Ovary (tissue), 10 donors: ENCODE measurements at regions of chr16 and their contacts with region 1.

Region 1: DNA sequence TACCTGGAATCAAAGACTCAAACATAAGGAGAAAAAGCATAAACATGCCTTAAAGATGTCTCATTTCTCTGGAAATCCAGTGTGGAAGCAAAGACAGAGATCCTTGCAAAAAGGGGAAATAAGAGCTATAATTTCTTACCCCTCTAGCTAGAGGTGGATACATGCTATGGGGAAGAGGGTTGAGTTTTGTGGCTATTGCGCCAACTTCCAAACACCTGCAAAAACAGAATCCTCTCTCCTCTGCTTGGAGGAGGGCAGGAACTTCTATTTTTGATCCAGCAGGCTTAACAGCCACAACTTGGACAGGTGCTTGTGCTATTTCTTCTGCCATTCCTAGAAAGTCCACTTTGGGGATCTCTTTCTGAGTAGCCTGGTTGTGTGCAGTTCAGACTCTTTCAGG is 21.5 kb upstream of the NUDT7 start:
- DNase-seq: no peak
- H3K4me3 ChIP-seq: no peak overlapping the region
- H3K27ac ChIP-seq: no peak overlapping the region
- H3K4me1 ChIP-seq: no peaks in the 10 kb centered on the region
- H3K27me3 ChIP-seq: no peaks in the 10 kb centered on the region
- CTCF ChIP-seq: no peak
- EP300 ChIP-seq: no peak
- POLR2A ChIP-seq: no peak

Region 2: DNA sequence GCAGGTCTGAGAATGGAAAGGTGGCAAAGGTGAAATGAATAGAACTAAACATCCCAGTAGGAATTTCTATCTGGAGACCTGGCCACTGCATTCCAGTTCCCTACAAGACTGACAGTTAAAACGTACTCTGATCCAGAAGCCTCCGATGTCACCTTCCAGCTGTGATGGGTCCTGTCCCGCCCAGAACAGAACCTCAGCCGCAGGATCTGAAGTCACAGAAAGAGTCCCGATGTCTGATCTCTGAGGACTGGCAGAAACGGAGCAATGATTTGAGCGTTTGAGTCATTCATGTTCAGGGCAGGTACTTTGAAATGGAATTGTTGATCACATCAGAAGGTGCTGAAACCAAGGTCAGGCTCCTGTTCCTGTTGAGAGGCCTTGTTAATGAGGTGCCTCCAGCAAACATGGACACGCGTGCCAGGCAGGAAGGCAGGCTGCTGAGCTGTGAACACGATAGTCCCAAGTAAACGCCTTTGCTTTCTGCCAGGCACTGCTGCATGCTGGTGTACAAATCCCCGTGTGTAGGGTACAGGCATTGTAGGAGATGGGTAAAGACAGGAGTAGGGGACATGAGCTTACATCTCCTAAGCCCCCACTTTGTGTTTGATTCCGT is 148.9 kb after region 1 on chr16:
- intact Hi-C with region 1: loop called in 1 of 4 experiments (anchors 5 kb)
- DNase-seq: no peak
- H3K4me3 ChIP-seq: no peak overlapping the region
- H3K27ac ChIP-seq: no peak overlapping the region
- H3K4me1 ChIP-seq: no peaks in the 10 kb centered on the region
- H3K27me3 ChIP-seq: no peaks in the 10 kb centered on the region
- CTCF ChIP-seq: no peak
- EP300 ChIP-seq: no peak
- POLR2A ChIP-seq: no peak